IMR-90 (cell line): ENCODE measurements at regions of chr12 and their contacts with region 1.

Region 1: DNA sequence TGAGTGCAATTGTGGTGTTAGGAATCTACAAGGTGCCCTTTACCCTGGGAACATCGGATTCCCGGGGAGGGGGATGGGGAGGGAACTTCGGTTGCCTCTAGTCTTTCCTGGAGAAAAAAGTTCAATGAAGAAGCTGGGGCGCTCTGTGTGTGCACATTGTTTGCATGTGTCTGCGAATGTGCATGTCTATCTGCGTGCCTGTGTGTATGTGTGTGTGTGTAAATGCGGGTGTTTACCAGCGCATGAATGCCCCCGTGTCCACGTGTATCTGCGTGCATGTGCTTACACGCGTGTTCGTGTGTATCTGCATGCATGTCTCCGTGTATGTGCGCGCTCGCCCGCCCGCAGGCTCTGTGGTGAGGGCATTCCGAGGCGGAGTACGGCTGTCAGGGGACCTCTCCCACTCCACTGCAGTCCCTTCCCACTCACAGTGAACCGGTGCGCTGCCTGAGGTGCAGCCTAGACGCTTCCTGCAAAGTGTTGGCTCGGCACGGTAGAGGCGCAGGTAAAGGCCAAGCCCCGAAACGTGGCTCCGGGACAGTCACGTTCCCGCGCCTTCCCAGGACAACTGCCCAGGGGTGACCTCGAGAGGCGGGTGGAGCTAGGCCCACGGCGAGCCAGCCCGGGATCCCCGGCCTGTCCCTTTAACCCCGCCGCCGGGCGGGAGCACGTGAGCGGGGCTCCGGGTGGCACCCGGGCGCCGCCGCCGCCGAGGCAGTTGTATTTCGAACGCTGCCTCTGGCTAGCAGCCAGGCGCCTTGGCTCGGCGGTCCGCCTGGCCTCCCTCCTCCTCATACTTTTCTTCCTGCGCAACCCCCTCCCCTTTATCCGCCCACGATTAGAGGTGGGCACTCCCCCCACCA is 539 bp upstream of the HMGA2 start:
- DNase-seq: peak; percentile 58
- ATAC-seq: peak; percentile 31
- H3K4me3 ChIP-seq: peak overlapping the region; percentile 93
- H3K27ac ChIP-seq: peak overlapping the region; percentile 99
- H3K4me1 ChIP-seq: peaks cover 9% of the 10 kb centered on the region; the same call in 1 of the 2 replicates
- H3K27me3 ChIP-seq: no peaks in the 10 kb centered on the region
- CTCF ChIP-seq: no peak
- POLR2A ChIP-seq: no peak
- RAD21 ChIP-seq: peak; percentile 1; the same call in 1 of the 2 replicates

Region 2: DNA sequence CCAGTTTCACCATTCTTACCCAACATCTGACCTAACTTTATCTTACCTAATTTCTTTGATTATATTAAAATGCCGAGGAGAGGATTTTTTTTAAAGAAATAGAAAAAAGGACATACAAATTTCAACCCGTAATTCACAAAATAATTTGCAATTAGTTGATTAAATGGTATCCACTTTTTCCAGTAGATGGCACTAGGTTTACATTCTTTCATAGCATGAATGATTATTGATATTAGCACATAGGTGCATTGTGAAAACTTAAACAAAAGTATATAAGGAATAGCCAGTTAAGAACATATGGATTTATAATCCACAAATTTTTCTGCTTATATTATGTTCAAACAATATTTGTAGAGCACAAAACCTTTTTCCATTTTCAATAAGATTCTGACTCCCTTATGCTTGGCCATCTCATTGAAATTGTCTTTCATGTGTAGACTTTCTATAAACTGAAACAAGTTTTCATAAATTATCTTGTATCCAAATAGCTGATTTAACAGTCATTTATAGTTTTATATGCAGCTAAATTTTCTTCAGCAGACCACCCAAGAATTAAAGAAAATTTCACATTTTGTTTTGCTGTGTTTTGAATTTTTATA is 509.9 kb before region 1 on chr12:
- CTCF ChIA-PET with region 1: no interaction called
- POLR2A ChIA-PET with region 1: no interaction called
- dilution Hi-C with region 1: no loop called
- in situ Hi-C with region 1: loop called (anchors 10 kb)
- intact Hi-C with region 1: loop called (anchors 2 kb)
- DNase-seq: peak; percentile 47
- ATAC-seq: peak; percentile 32; the same call in 1 of the 2 replicates
- H3K4me3 ChIP-seq: no peak overlapping the region
- H3K27ac ChIP-seq: no peak overlapping the region
- H3K4me1 ChIP-seq: 0 out of 2 replicates have a peak, but pooled peaks cover 1% of the 10 kb centered on the region
- H3K27me3 ChIP-seq: no peaks in the 10 kb centered on the region
- CTCF ChIP-seq: peak; percentile 62
- POLR2A ChIP-seq: no peak
- RAD21 ChIP-seq: peak; percentile 74

Region 3: DNA sequence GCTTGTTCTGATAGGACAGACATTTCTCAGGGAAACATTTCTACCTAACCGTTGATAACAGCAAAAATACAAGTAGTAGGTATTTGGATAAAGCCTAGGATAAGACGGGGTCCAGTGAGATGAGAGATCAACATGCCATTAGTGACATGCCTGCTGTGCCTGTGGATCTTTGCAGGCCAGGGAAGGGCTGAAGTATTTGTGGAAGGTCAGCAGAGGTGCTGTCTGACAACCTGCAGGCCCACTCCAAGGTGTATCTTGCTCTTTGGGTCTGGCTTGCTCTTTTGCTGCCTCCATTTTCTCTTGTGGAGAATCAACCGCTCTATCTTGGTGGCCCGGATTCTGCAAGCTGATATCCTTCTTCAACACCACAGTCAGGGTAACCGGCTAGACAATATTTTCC is 498.6 kb before region 1 on chr12:
- CTCF ChIA-PET with region 1: no interaction called
- POLR2A ChIA-PET with region 1: no interaction called
- dilution Hi-C with region 1: no loop called
- in situ Hi-C with region 1: no loop called
- intact Hi-C with region 1: no loop called
- DNase-seq: no peak
- ATAC-seq: no peak
- H3K4me3 ChIP-seq: no peak overlapping the region
- H3K27ac ChIP-seq: no peak overlapping the region
- H3K4me1 ChIP-seq: peaks cover 14% of the 10 kb centered on the region
- H3K27me3 ChIP-seq: no peaks in the 10 kb centered on the region
- CTCF ChIP-seq: no peak
- POLR2A ChIP-seq: no peak
- RAD21 ChIP-seq: no peak

Region 4: GRCh38 chr12:65673732-65674131 is 150.0 kb before region 1 on chr12:
- CTCF ChIA-PET with region 1: no interaction called
- POLR2A ChIA-PET with region 1: no interaction called
- dilution Hi-C with region 1: no loop called
- in situ Hi-C with region 1: no loop called
- intact Hi-C with region 1: loop called (anchors 5 kb)
- DNase-seq: peak; percentile 51
- ATAC-seq: no peak; the same call in 1 of the 2 replicates
- H3K4me3 ChIP-seq: no peak overlapping the region
- H3K27ac ChIP-seq: no peak overlapping the region
- H3K4me1 ChIP-seq: peaks cover 17% of the 10 kb centered on the region
- H3K27me3 ChIP-seq: no peaks in the 10 kb centered on the region
- CTCF ChIP-seq: no peak; the same call in 1 of the 2 replicates
- POLR2A ChIP-seq: no peak
- RAD21 ChIP-seq: peak; percentile 45

Region 5: DNA sequence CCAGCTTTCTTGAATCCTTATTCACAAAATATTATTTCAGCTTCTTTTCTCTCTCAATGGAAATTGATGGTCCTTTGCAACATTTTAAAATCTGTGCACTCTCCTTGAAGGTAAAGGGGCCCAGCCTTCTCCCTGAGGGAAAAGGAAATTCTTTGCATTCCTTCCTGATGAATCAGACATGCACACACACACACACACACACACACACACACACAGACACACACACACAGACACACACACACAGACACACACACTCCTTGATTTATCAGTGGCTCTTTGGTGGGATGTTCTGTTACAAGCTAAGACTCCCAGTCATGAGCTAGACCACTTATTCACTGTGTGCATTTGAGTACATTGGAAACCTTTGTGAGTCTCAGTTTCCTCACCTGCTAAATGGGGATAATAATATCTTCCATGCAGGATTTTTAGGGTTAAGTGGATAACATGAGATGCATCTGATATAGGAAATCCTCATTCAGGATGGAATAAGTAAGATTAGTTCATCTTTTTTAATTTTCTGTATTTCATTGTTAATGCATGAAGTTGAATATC is 44.6 kb before region 1 on chr12:
- CTCF ChIA-PET with region 1: no interaction called
- POLR2A ChIA-PET with region 1: no interaction called
- dilution Hi-C with region 1: no loop called
- in situ Hi-C with region 1: no loop called
- intact Hi-C with region 1: no loop called
- DNase-seq: peak; percentile 61
- ATAC-seq: peak; percentile 44; the same call in 1 of the 2 replicates
- H3K4me3 ChIP-seq: no peak overlapping the region
- H3K27ac ChIP-seq: no peak overlapping the region
- H3K4me1 ChIP-seq: no peaks in the 10 kb centered on the region; the same call in 1 of the 2 replicates
- H3K27me3 ChIP-seq: no peaks in the 10 kb centered on the region
- CTCF ChIP-seq: no peak
- POLR2A ChIP-seq: no peak
- RAD21 ChIP-seq: no peak

Region 6: GRCh38 chr12:65868133-65868705 is 44.5 kb after region 1 on chr12:
- CTCF ChIA-PET with region 1: no interaction called
- POLR2A ChIA-PET with region 1: no interaction called
- dilution Hi-C with region 1: no loop called
- in situ Hi-C with region 1: no loop called
- intact Hi-C with region 1: no loop called
- DNase-seq: peak; percentile 97
- ATAC-seq: peak; percentile 79
- H3K4me3 ChIP-seq: no peak overlapping the region
- H3K27ac ChIP-seq: peak overlapping the region; percentile 16; the same call in 1 of the 2 replicates
- H3K4me1 ChIP-seq: peaks cover 23% of the 10 kb centered on the region
- H3K27me3 ChIP-seq: no peaks in the 10 kb centered on the region
- CTCF ChIP-seq: no peak
- POLR2A ChIP-seq: no peak
- RAD21 ChIP-seq: no peak

Region 7: GRCh38 chr12:65891987-65892481 is 68.3 kb after region 1 on chr12:
- CTCF ChIA-PET with region 1: no interaction called
- POLR2A ChIA-PET with region 1: no interaction called
- dilution Hi-C with region 1: no loop called
- in situ Hi-C with region 1: no loop called
- intact Hi-C with region 1: loop called (anchors 5 kb)
- DNase-seq: peak; percentile 99
- ATAC-seq: peak; percentile 75
- H3K4me3 ChIP-seq: peak overlapping the region; percentile 14
- H3K27ac ChIP-seq: peak overlapping the region; percentile 83
- H3K4me1 ChIP-seq: peaks cover 29% of the 10 kb centered on the region
- H3K27me3 ChIP-seq: no peaks in the 10 kb centered on the region
- CTCF ChIP-seq: no peak
- POLR2A ChIP-seq: peak; percentile 62
- RAD21 ChIP-seq: peak; percentile 27

Region 8: GRCh38 chr12:66035288-66035966 is 211.7 kb after region 1 on chr12:
- CTCF ChIA-PET with region 1: interaction called, 3 read pairs
- POLR2A ChIA-PET with region 1: no interaction called
- dilution Hi-C with region 1: no loop called
- in situ Hi-C with region 1: no loop called
- intact Hi-C with region 1: loop called (anchors 5 kb)
- DNase-seq: peak; percentile 61
- ATAC-seq: 0 out of 2 replicates have a peak, but pooled peaks have one; percentile 24
- H3K4me3 ChIP-seq: no peak overlapping the region
- H3K27ac ChIP-seq: no peak overlapping the region
- H3K4me1 ChIP-seq: peaks cover 6% of the 10 kb centered on the region
- H3K27me3 ChIP-seq: no peaks in the 10 kb centered on the region
- CTCF ChIP-seq: peak; percentile 56
- POLR2A ChIP-seq: no peak
- RAD21 ChIP-seq: peak; percentile 53